Activated T-helper 1 cell treated with anti-CD3 and anti-CD28 coated beads, Interleukin-12 subunit alpha, Interleukin-12 subunit beta, Interleukin-2, Interleukin-4 antibody, amounts not matched to agents 30 ng/mL and 10 ng/mL and 1 ng/mL, durations not matched to agents 14 hours and 24 hours and 36 hours (primary cell): ENCODE measurements at regions of chr19 and their contacts with region 1.

Region 1: GRCh38 chr19:6925801-6926751 is 38.7 kb downstream of the ADGRE1 start:
- DNase-seq: peak; percentile 50
- H3K4me3 Mint-ChIP-seq: peak overlapping the region; percentile 78
- H3K27ac Mint-ChIP-seq: peak overlapping the region; percentile 79
- H3K4me1 Mint-ChIP-seq: peaks cover 23% of the 10 kb centered on the region
- H3K27me3 Mint-ChIP-seq: peaks cover 2% of the 10 kb centered on the region

Region 2: DNA sequence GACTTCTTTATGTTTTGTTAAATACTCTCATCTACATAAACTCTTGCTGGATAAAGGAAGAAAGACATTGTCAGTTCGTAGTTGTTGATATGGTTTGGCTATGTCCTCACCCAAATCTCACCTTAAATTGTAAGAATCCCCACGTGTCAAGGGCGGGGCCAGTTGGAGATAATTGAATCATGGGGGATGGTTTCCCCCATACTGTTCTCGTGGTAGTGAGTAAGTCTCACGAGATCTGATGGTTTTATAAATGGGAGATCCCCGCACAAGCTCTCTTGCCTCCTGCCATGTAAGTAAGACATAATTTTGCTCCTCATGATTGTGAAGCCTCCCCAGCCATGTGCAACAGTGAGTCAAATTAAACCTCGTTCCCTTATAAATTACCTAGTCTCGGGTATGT is 35.1 kb before region 1 on chr19:
- intact Hi-C with region 1: loop called (anchors 1 kb)
- DNase-seq: peak; percentile 38
- H3K4me3 Mint-ChIP-seq: peak overlapping the region; percentile 45
- H3K27ac Mint-ChIP-seq: peak overlapping the region; percentile 91
- H3K4me1 Mint-ChIP-seq: peaks cover 61% of the 10 kb centered on the region
- H3K27me3 Mint-ChIP-seq: no peaks in the 10 kb centered on the region